ENCODE measurements at regions of chr14 and their contacts with region 1.

Region 1: GRCh38 chr14:24630872-24631477 is 3.0 kb downstream of the GZMB start:
- DNase-seq: no peak
- ATAC-seq: no peak
- H3K4me3 Mint-ChIP-seq: peak overlapping the region; percentile 89
- H3K27ac Mint-ChIP-seq: peak overlapping the region; percentile 97
- H3K4me1 Mint-ChIP-seq: peaks cover 73% of the 10 kb centered on the region
- H3K27me3 Mint-ChIP-seq: no peaks in the 10 kb centered on the region

Region 2: GRCh38 chr14:24605435-24606190 is 25.4 kb before region 1 on chr14:
- CTCF ChIA-PET with region 1: interaction called, 72 read pairs
- DNase-seq: peak; percentile 87
- ATAC-seq: peak; percentile 79
- H3K4me3 Mint-ChIP-seq: peak overlapping the region; percentile 73
- H3K27ac Mint-ChIP-seq: peak overlapping the region; percentile 92
- H3K4me1 Mint-ChIP-seq: peaks cover 55% of the 10 kb centered on the region
- H3K27me3 Mint-ChIP-seq: no peaks in the 10 kb centered on the region

Region 3: DNA sequence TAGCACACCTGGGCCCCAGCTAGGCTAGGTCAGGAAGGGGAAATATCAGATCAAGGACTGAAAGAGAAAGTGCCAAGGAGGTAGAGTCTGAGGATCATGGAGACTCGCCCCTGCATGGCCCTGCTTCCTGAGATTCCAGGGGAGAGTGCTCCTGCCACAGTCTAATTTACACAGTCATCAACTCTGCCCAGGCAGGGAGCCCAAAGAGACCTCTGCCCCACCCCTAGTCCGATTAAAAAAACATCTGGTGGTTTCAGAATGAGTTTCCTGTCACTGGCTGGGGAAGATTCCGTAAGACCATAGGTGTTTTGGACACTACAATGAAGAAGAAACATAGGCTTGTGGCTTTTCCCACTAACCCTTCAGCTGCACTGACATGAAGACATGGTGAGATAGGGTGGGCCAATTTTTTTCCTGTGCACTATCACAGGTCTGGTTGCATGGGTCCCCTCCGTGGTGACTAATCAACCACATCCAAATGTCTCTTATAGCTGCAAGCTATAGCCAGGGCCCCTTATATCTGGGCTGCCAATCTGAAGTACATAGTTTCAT is 34.5 kb after region 1 on chr14:
- CTCF ChIA-PET with region 1: interaction called, 30 read pairs
- DNase-seq: peak; percentile 91
- ATAC-seq: peak; percentile 83
- H3K4me3 Mint-ChIP-seq: peak overlapping the region; percentile 61
- H3K27ac Mint-ChIP-seq: peak overlapping the region; percentile 89
- H3K4me1 Mint-ChIP-seq: peaks cover 91% of the 10 kb centered on the region
- H3K27me3 Mint-ChIP-seq: no peaks in the 10 kb centered on the region

Region 4: GRCh38 chr14:24678801-24679247 is 47.8 kb after region 1 on chr14:
- CTCF ChIA-PET with region 1: interaction called, 45 read pairs
- DNase-seq: peak; percentile 91
- ATAC-seq: peak; percentile 73
- H3K4me3 Mint-ChIP-seq: peak overlapping the region; percentile 72
- H3K27ac Mint-ChIP-seq: peak overlapping the region; percentile 90
- H3K4me1 Mint-ChIP-seq: peaks cover 70% of the 10 kb centered on the region
- H3K27me3 Mint-ChIP-seq: no peaks in the 10 kb centered on the region

Region 5: DNA sequence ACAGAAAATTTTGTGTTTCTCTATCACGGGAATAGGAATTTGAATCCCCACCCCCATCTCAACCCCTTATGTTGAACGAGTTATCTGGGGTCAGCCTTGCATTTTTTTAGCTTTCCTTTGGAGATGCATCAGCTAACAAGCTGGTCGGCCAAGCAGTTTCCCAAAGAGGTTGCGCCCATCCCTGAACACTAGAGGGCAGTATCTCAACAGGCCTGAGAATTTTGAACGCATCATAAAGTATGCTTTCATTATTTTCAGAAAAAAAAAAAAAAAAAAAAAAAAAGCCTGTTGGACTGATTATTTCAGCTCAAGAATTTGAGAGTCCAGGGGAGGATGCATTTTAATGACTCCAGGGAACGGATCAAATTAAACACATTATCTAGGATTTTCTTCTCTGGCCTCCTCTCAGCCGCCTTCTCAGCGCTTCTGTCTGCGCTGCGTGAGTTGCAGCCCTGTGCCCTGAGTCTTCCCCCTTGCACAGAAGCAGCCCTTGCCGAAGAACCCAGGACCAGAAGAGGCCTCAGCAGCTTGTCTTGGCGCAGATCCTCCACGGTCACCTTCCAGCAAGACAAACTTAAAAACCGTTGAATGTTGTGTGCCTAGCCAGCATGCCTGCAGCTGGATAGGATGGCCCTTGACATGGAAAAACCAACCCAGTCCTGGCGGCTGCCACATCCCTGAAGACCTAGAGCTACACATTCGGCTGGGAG is 79.6 kb after region 1 on chr14:
- CTCF ChIA-PET with region 1: interaction called, 10 read pairs
- DNase-seq: peak; percentile 77
- ATAC-seq: peak; percentile 77
- H3K4me3 Mint-ChIP-seq: no peak overlapping the region
- H3K27ac Mint-ChIP-seq: no peak overlapping the region
- H3K4me1 Mint-ChIP-seq: peaks cover 4% of the 10 kb centered on the region
- H3K27me3 Mint-ChIP-seq: no peaks in the 10 kb centered on the region

Measured in activated CD8-positive, alpha-beta memory T cell treated with anti-CD3 and anti-CD28 coated beads, Interleukin-2, amount 10 ng/mL, durations not matched to agents 7 days and 5 days (primary cell).